Activated T-helper 1 cell treated with anti-CD3 and anti-CD28 coated beads, Interleukin-12 subunit alpha, Interleukin-12 subunit beta, Interleukin-2, Interleukin-4 antibody, amounts not matched to agents 30 ng/mL and 10 ng/mL and 1 ng/mL, durations not matched to agents 14 hours and 24 hours and 36 hours (primary cell): ENCODE measurements at regions of chr15 and their contacts with region 1.

Region 1: GRCh38 chr15:67521029-67521811 is at the start of gene C15orf61:
- DNase-seq: peak; percentile 84
- H3K4me3 Mint-ChIP-seq: peak within 1 kb of the TSS; percentile 95
- H3K27ac Mint-ChIP-seq: peak within 1 kb of the TSS; percentile 98
- H3K4me1 Mint-ChIP-seq: peaks cover 25% of the 10 kb centered on the region
- H3K27me3 Mint-ChIP-seq: no peaks in the 10 kb centered on the region
- total RNA-seq, gene C15orf61: 6.6 and 6.9 TPM in 2 replicates

Region 2: GRCh38 chr15:67254238-67255175 is 266.7 kb before region 1 on chr15 and contains the starts of genes AAGAB and IQCH:
- intact Hi-C with region 1: loop called (anchors 10 kb)
- DNase-seq: peak; percentile 98
- H3K4me3 Mint-ChIP-seq: peak within 1 kb of the TSS; percentile 100
- H3K27ac Mint-ChIP-seq: peak within 1 kb of the TSS; percentile 98
- H3K4me1 Mint-ChIP-seq: peaks cover 36% of the 10 kb centered on the region
- H3K27me3 Mint-ChIP-seq: peaks cover 18% of the 10 kb centered on the region
- total RNA-seq, gene AAGAB: 41.7 and 44.0 TPM in 2 replicates
- total RNA-seq, gene IQCH: 0.88 and 1.2 TPM in 2 replicates

Region 3: DNA sequence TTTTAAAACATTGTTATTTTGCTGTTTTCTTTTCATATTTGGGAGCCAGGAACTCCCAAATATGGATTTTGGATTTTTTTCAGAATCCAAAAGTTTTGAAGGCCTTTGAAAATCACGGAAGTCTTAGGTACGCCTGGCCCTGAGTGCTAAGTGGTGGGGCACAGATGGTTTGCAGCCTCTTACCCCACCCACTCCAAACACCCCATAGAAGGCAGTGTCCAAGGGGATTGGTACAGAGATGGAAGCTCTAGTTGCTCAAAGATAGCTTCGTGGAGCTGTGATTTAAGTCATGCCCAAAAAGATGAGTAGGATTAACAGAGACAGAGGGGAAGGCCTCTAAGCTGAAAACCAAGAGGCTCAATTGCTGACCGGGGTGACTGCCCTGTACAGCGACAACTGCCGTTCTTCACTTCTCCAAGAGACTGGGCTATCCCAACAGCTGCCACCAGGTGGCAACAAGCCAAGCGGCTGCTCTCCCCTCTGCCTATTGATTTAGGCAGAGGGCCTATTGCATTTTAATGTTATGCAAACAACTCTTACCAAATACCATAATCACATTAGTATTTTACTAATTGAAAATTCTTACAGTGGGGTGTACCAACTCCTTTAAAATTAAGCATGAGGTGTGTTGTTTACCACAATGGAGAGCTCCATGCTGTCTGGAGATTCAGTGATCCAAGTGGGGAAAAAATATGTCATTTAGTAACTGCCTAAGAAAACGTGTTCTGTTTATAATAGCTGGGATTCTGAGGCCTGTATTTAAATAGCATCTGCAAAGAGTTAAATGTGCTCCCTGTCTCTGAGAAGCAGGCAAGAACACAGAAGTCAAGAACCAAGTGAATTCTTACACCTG is 64.3 kb before region 1 on chr15:
- intact Hi-C with region 1: loop called (anchors 5 kb)
- DNase-seq: peak; percentile 67
- H3K4me3 Mint-ChIP-seq: no peak overlapping the region
- H3K27ac Mint-ChIP-seq: no peak overlapping the region
- H3K4me1 Mint-ChIP-seq: no peaks in the 10 kb centered on the region
- H3K27me3 Mint-ChIP-seq: peaks cover 11% of the 10 kb centered on the region

Region 4: DNA sequence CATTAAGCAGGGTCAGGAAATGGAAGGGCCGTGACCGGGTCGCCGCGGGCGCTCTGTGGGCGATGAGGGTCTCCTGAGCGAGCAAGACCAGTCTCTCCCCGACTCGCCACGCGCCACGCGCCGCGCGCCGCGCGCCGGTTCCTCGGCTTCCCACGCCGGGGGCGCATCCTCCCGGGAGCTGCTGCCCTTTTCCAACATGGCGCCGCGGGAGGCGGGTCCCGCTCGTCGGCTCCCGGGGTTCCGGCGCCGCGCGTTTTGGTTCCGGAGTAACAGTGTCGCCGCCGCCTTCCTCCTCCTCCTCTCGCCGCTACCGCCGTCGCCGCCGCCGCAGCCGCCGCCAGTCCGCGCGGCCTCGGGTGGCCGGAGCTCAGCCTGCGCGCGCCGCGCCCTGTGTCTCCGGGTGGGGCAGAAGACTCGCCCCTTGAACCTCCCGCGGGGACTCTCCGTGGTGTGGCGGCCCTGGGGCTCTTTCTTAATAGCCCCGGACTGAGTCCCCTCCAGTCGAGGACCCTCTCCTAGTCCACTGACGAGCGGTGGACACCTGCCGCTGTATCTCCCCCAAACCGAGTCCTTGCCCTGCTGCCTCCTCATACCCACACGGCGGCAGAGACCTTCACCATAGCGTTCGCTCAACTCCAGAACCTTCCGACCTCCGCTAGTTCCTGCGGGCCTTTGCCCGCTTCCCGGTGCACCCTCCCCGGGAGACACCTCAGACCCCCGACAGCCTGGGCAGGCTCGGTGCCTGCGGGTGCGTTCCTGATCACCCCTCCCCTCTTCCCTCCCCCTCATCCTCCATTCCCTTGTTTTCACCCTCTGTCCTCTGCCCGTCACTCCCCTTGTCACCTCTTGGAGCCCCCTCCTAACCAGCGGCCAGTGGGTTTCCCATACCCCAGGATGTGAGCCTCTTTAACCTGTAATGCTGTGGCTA is 21.5 kb after region 1 on chr15 and contains the start of gene MAP2K5:
- intact Hi-C with region 1: loop called (anchors 1 kb)
- DNase-seq: peak; percentile 82
- H3K4me3 Mint-ChIP-seq: peak within 1 kb of the TSS; percentile 98
- H3K27ac Mint-ChIP-seq: peak within 1 kb of the TSS; percentile 96
- H3K4me1 Mint-ChIP-seq: peaks cover 43% of the 10 kb centered on the region
- H3K27me3 Mint-ChIP-seq: no peaks in the 10 kb centered on the region
- total RNA-seq, gene MAP2K5: 22.1 and 27.5 TPM in 2 replicates

Region 5: GRCh38 chr15:67762610-67763368 is 241.6 kb after region 1 on chr15:
- intact Hi-C with region 1: loop called (anchors 2 kb)
- DNase-seq: peak; percentile 37
- H3K4me3 Mint-ChIP-seq: peak overlapping the region; percentile 24
- H3K27ac Mint-ChIP-seq: peak overlapping the region; percentile 41
- H3K4me1 Mint-ChIP-seq: peaks cover 46% of the 10 kb centered on the region
- H3K27me3 Mint-ChIP-seq: peaks cover 20% of the 10 kb centered on the region

Region 6: GRCh38 chr15:67803996-67804843 is 283.0 kb after region 1 on chr15:
- intact Hi-C with region 1: no loop called
- DNase-seq: no peak
- H3K4me3 Mint-ChIP-seq: no peak overlapping the region
- H3K27ac Mint-ChIP-seq: no peak overlapping the region
- H3K4me1 Mint-ChIP-seq: no peaks in the 10 kb centered on the region
- H3K27me3 Mint-ChIP-seq: no peaks in the 10 kb centered on the region

Region 7: GRCh38 chr15:67820992-67821783 is 300.0 kb after region 1 on chr15:
- intact Hi-C with region 1: loop called (anchors 5 kb)
- DNase-seq: no peak
- H3K4me3 Mint-ChIP-seq: no peak overlapping the region
- H3K27ac Mint-ChIP-seq: peak overlapping the region; percentile 79
- H3K4me1 Mint-ChIP-seq: peaks cover 17% of the 10 kb centered on the region
- H3K27me3 Mint-ChIP-seq: peaks cover 79% of the 10 kb centered on the region